ENCODE measurements at regions of chr17 and their contacts with region 1.

Region 1: GRCh38 chr17:38444151-38444550 is 15.9 kb downstream of the ARHGAP23 start:
- DNase-seq: peak; percentile 91
- H3K4me3 ChIP-seq: no peak overlapping the region; a peak in 1 of 4 replicates
- H3K27ac ChIP-seq: no peak overlapping the region
- H3K4me1 ChIP-seq: peaks cover 10 to 17% of the 10 kb centered on the region in 2 experiments; a peak in 2 of 4 replicates
- H3K27me3 ChIP-seq: no peaks in the 10 kb centered on the region
- CTCF ChIP-seq: peak; percentile 94
- EP300 ChIP-seq: no peak
- RAD21 ChIP-seq: peak; percentile 97

Region 2: DNA sequence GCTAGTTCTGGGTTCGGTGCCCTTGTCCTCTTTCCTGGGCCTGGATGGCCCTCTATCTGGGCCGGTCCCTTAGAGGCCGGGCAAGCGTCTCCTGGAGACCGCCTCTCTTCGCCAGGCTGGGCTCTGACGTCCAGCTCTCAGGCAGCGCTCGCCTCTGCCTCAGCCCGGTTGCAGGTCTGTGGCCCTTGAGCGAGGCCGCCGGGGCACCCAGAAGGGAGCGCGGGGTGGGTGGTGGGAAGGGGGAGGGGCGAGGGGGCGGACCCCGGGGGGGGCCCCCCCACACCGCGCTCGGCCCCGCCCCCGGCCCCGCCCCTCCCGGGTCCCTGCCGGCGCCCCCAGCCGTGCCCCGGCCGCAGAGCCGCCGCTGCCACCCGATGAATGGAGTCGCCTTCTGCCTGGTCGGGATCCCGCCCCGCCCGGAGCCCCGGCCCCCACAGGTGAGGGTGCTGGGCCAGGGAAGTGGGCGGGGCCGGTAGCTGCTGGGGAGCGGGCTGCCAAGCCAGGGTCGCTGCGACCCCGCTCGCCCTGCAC is 16.0 kb before region 1 on chr17 and contains the start of gene ARHGAP23:
- CTCF ChIA-PET with region 1: interaction called, 146 read pairs
- POLR2A ChIA-PET with region 1: interaction called, 3 read pairs
- DNase-seq: peak; percentile 96
- H3K4me3 ChIP-seq: peak within 1 kb of the TSS; percentile 70 to 81
- H3K27ac ChIP-seq: peak within 1 kb of the TSS; percentile 48 to 85
- H3K4me1 ChIP-seq: peaks cover 10 to 25% of the 10 kb centered on the region in 2 experiments; a peak in 2 of 4 replicates
- H3K27me3 ChIP-seq: no peaks in the 10 kb centered on the region
- CTCF ChIP-seq: no peak
- EP300 ChIP-seq: no peak
- RAD21 ChIP-seq: no peak
- polyA plus RNA-seq, gene ARHGAP23: 10.6 and 19.2 TPM in 2 replicates

Region 3: GRCh38 chr17:38454516-38454915 is 10.4 kb after region 1 on chr17:
- CTCF ChIA-PET with region 1: interaction called, 12 read pairs
- POLR2A ChIA-PET with region 1: no interaction called
- DNase-seq: peak; percentile 84
- H3K4me3 ChIP-seq: peak overlapping the region; percentile 51 to 64; a peak in 3 of 4 replicates
- H3K27ac ChIP-seq: peak overlapping the region; percentile 71 to 80
- H3K4me1 ChIP-seq: peaks cover 48 to 53% of the 10 kb centered on the region in 2 experiments; a peak in 3 of 4 replicates
- H3K27me3 ChIP-seq: no peaks in the 10 kb centered on the region
- CTCF ChIP-seq: no peak
- EP300 ChIP-seq: peak; percentile 47 to 50; a peak in 2 of 4 replicates
- RAD21 ChIP-seq: no peak

Region 4: GRCh38 chr17:38464723-38465390 is 20.7 kb after region 1 on chr17:
- CTCF ChIA-PET with region 1: interaction called, 16 read pairs
- POLR2A ChIA-PET with region 1: no interaction called
- DNase-seq: peak; percentile 96
- H3K4me3 ChIP-seq: peak overlapping the region; percentile 38 to 64
- H3K27ac ChIP-seq: peak overlapping the region; percentile 84 to 96
- H3K4me1 ChIP-seq: peaks cover 9 to 28% of the 10 kb centered on the region in 2 experiments; a peak in 3 of 4 replicates
- H3K27me3 ChIP-seq: no peaks in the 10 kb centered on the region
- CTCF ChIP-seq: no peak
- EP300 ChIP-seq: peak; percentile 13 to 29; a peak in 1 of 4 replicates
- RAD21 ChIP-seq: no peak

Region 5: GRCh38 chr17:38485146-38485468 is 41.0 kb after region 1 on chr17:
- CTCF ChIA-PET with region 1: interaction called, 14 read pairs
- POLR2A ChIA-PET with region 1: no interaction called
- DNase-seq: no peak
- H3K4me3 ChIP-seq: peak overlapping the region in 1 of 2 experiments; percentile 43; a peak in 1 of 4 replicates
- H3K27ac ChIP-seq: no peak overlapping the region
- H3K4me1 ChIP-seq: no peaks in the 10 kb centered on the region
- H3K27me3 ChIP-seq: no peaks in the 10 kb centered on the region
- CTCF ChIP-seq: no peak
- EP300 ChIP-seq: no peak
- RAD21 ChIP-seq: no peak

Region 6: DNA sequence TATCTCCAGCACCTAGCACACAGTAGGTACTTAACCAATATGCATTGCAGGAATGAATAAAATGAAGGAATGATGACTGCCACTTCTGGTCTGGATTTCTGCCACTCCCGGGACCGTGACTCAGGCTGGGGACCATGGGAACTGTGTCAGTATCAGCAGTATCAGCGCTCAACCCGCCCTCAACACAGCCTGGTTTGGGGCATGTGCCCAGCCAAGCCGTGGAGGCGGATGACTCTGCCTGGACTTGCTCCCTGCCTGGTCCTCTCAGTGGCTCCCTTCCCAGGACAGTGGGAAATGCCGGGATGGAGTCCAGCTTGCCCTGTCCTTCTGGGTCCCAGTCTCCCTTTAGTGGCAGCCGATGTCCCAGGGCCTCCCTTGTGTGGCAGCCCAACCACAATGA is 106.5 kb after region 1 on chr17:
- CTCF ChIA-PET with region 1: no interaction called
- POLR2A ChIA-PET with region 1: no interaction called
- DNase-seq: no peak
- H3K4me3 ChIP-seq: no peak overlapping the region
- H3K27ac ChIP-seq: no peak overlapping the region
- H3K4me1 ChIP-seq: peaks cover 0 to 15% of the 10 kb centered on the region in 2 experiments; a peak in 2 of 4 replicates
- H3K27me3 ChIP-seq: no peaks in the 10 kb centered on the region
- CTCF ChIP-seq: no peak
- EP300 ChIP-seq: no peak
- RAD21 ChIP-seq: no peak

Measured in SK-N-SH (cell line).